Natural killer cell (primary cell): ENCODE measurements at regions of chr14 and their contacts with region 1.

Region 1: DNA sequence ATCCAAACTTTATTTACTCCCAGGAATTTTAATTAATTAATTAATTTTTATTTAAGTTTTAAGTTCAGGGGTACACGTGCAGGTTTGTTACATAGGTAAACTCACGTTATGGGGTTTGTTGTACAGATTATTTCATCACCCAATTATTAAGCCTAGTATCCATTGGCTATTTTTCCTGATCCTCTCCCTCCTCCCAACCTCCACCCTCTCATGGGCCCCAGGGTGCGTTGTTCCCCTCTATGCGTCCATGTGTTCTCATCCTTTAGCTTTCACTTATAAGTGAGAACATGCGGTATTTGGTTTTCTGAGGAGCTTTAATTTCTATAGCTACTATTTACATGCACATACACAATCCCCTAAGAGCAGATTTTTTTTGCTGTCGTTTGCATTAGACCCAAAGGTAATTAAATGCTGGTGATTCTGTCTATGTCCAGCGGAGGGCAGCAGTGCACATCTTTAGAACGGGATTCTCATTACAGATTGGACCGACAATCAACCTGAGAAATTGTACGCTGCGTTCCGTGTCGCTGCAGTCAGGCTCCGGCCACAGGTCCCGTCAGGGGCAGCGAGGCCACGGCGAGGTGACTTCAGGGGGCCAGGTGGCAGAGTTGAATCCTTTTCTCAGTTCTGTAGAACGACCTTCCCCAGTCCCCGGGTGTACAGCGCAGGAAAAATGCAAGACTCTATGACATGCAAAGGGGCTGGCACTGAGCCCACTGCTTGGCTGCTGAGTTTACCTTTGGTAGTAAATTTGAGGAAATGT is 11.6 kb downstream of the TMEM30B start:
- DNase-seq: peak; percentile 62 to 90
- ATAC-seq: peak; percentile 89 to 98 (median 98)
- H3K4me3 ChIP-seq: no peak overlapping the region
- H3K4me3 Mint-ChIP-seq: peak overlapping the region; percentile 32
- H3K27ac ChIP-seq: no peak overlapping the region
- H3K27ac Mint-ChIP-seq: no peak overlapping the region
- H3K4me1 ChIP-seq: peaks cover 4% of the 10 kb centered on the region
- H3K4me1 Mint-ChIP-seq: peaks cover 7 to 9% of the 10 kb centered on the region in 2 donors
- H3K27me3 ChIP-seq: peaks cover 6% of the 10 kb centered on the region
- H3K27me3 Mint-ChIP-seq: peaks cover 42 to 62% of the 10 kb centered on the region in 2 donors
- CTCF ChIP-seq: peak; percentile 74

Region 2: GRCh38 chr14:61281186-61281947 is 11.9 kb after region 1 on chr14 and contains the start of gene TMEM30B:
- intact Hi-C with region 1: loop called (anchors 1 kb)
- DNase-seq: no peak
- ATAC-seq: no peak
- H3K4me3 ChIP-seq: peak within 1 kb of the TSS; percentile 45
- H3K4me3 Mint-ChIP-seq: peak within 1 kb of the TSS; percentile 95
- H3K27ac ChIP-seq: peak within 1 kb of the TSS; percentile 69
- H3K27ac Mint-ChIP-seq: peak within 1 kb of the TSS; percentile 83 to 95
- H3K4me1 ChIP-seq: peaks cover 16% of the 10 kb centered on the region
- H3K4me1 Mint-ChIP-seq: peaks cover 23 to 26% of the 10 kb centered on the region in 2 donors
- H3K27me3 ChIP-seq: no peaks in the 10 kb centered on the region
- H3K27me3 Mint-ChIP-seq: peaks cover 8 to 20% of the 10 kb centered on the region in 2 donors
- CTCF ChIP-seq: no peak
- total RNA-seq, gene TMEM30B: 1.0 to 1.4 (median 1.3) TPM

Region 3: DNA sequence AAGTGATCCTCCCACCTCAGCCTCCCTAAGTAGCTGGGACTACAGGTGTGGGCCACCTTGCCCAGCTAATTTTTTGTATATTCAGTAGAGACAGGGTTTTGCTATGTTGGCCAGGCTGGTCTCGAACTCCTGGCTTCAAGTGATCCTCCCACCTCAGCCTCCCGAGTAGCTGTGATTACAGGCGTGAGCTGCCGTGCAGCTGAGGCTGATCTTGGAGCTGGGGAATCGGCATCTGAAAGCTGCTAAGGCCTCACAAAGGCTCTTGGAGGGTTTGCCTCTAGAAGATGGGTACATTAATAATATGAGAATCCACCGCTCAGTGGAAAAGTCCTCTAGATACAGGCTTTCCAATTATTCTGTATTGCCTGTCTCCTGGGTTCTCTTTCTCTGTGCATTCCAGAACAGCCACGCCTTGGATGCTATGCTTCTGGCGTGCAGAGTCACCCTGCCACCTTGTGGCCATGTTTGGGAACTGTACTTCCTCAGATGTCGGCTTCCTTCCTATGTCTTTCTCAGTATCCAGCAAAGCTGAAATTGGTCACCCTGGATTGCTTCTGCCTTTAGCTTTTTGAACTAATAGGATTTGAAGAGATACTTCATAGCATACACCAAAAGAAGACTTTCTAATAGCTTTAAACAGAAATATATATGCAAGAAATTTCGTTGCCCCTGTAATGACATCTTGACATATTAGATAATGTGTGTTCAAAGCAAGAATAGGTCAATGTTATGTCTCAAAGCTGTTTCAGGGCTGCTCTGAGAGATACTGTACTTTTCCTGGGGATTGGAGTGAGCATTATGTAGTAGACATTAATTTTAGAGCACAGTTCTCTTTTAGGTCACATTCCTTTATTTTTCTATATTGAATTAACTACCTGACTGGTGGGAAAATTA is 568.1 kb after region 1 on chr14:
- intact Hi-C with region 1: loop called (anchors 1 kb)
- DNase-seq: peak; percentile 58 to 90
- ATAC-seq: peak; percentile 90 to 98 (median 98)
- H3K4me3 ChIP-seq: no peak overlapping the region
- H3K4me3 Mint-ChIP-seq: no peak overlapping the region
- H3K27ac ChIP-seq: no peak overlapping the region
- H3K27ac Mint-ChIP-seq: no peak overlapping the region
- H3K4me1 ChIP-seq: no peaks in the 10 kb centered on the region
- H3K4me1 Mint-ChIP-seq: no peaks in the 10 kb centered on the region
- H3K27me3 ChIP-seq: no peaks in the 10 kb centered on the region
- H3K27me3 Mint-ChIP-seq: peaks cover 21 to 32% of the 10 kb centered on the region in 2 donors
- CTCF ChIP-seq: peak; percentile 90